Mammary epithelial cell (primary cell): ENCODE measurements at regions of chr3 and their contacts with region 1.

Region 1: GRCh38 chr3:170221924-170222646 is at the start of gene PRKCI:
- DNase-seq: peak; percentile 96
- H3K4me3 ChIP-seq: peak within 1 kb of the TSS; percentile 51 to 84 (median 77)
- H3K27ac ChIP-seq: peak within 1 kb of the TSS; percentile 99
- H3K4me1 ChIP-seq: peaks cover 28% of the 10 kb centered on the region
- H3K27me3 ChIP-seq: no peaks in the 10 kb centered on the region
- CTCF ChIP-seq: no peak
- total RNA-seq, gene PRKCI: 62.7 to 122 TPM

Region 2: GRCh38 chr3:170154569-170155143 is 67.4 kb before region 1 on chr3:
- CTCF ChIA-PET with region 1: no interaction called
- dilution Hi-C with region 1: no loop called
- in situ Hi-C with region 1: no loop called
- intact Hi-C with region 1: no loop called
- DNase-seq: no peak
- H3K4me3 ChIP-seq: no peak overlapping the region
- H3K27ac ChIP-seq: no peak overlapping the region
- H3K4me1 ChIP-seq: no peaks in the 10 kb centered on the region
- H3K27me3 ChIP-seq: no peaks in the 10 kb centered on the region
- CTCF ChIP-seq: no peak

Region 3: DNA sequence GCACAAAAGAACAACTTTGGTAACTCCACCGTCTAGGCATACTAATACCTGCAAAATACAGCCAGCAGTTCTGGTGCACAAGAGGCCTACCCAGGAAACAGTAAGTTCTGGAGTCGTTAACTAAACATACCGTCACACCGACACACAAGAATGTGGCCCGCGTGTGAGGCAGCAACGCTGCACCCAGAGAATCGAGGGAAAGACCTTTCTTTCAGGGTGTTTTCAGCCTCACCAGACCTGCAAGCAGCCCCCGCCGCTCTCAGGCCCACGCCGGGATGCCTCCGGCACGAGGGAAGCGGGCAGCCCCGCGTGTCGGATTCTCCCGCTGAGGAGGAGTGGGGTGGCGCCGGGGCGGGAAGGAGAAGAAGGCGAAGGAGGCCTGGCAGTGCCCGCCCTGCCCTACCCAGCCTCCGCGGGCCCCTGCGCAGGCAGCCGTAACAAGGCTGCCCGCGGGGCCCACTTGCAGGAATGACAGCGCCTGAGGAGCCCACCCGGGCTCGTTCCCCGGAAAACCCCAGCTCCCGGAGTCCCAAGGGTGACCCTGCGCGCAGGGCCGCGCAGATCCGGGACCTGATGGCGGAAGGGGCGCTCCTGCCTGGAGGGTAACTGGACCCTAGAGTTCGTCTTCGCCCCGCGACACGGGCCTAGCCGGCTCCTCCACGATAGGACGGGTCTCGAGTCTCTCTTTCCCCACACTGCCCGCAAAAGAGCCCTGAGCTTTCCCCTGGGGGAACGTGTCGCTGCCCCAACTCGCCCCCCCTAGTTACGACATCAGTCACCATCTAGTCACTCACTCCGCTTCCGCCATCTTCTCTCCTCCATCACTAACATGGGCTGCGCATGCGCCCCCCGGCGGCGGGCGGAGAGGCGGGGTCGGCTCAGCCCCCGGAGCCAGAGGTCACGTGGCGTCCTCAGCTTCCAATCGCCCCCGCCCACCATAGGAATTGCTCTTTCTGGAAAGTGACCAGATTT is 40.9 kb before region 1 on chr3 and contains the start of gene PHC3:
- CTCF ChIA-PET with region 1: no interaction called
- dilution Hi-C with region 1: no loop called
- in situ Hi-C with region 1: no loop called
- intact Hi-C with region 1: loop called (anchors 2 kb)
- DNase-seq: peak; percentile 82
- H3K4me3 ChIP-seq: peak within 1 kb of the TSS; percentile 72 to 95 (median 94)
- H3K27ac ChIP-seq: peak within 1 kb of the TSS; percentile 83
- H3K4me1 ChIP-seq: peaks cover 17% of the 10 kb centered on the region
- H3K27me3 ChIP-seq: no peaks in the 10 kb centered on the region
- CTCF ChIP-seq: peak in 1 of 2 donors; percentile 15
- total RNA-seq, gene PHC3: 43.0 to 51.4 TPM

Region 4: GRCh38 chr3:170189398-170190256 is 32.5 kb before region 1 on chr3:
- CTCF ChIA-PET with region 1: interaction called, 12 read pairs
- dilution Hi-C with region 1: no loop called
- in situ Hi-C with region 1: no loop called
- intact Hi-C with region 1: no loop called
- DNase-seq: no peak
- H3K4me3 ChIP-seq: no peak overlapping the region
- H3K27ac ChIP-seq: no peak overlapping the region
- H3K4me1 ChIP-seq: no peaks in the 10 kb centered on the region
- H3K27me3 ChIP-seq: no peaks in the 10 kb centered on the region
- CTCF ChIP-seq: no peak

Region 5: DNA sequence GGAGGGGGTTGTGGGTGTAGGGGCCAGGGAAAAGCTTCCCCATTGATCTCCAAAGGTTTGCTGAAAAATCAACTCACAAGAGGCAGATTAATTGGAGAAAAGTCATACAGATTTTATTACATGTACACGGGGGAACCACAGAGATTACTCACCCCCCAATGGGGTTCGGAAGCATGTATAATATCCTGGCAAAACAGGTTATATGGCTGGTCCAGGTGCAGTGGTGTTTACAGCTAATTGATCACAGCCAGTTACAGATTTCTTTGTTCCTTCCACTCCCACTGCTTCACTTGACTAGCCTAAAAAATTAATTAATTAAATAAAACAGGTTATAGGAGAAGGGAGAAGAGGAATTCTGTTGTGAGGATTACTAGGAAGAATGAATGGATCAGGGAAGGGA is 22.5 kb after region 1 on chr3:
- CTCF ChIA-PET with region 1: no interaction called
- dilution Hi-C with region 1: no loop called
- in situ Hi-C with region 1: no loop called
- intact Hi-C with region 1: loop called (anchors 2 kb)
- DNase-seq: peak; percentile 86
- H3K4me3 ChIP-seq: no peak overlapping the region
- H3K27ac ChIP-seq: peak overlapping the region; percentile 42
- H3K4me1 ChIP-seq: peaks cover 16% of the 10 kb centered on the region
- H3K27me3 ChIP-seq: no peaks in the 10 kb centered on the region
- CTCF ChIP-seq: no peak

Region 6: GRCh38 chr3:170257145-170257544 is 35.1 kb after region 1 on chr3:
- CTCF ChIA-PET with region 1: no interaction called
- dilution Hi-C with region 1: no loop called
- in situ Hi-C with region 1: no loop called
- intact Hi-C with region 1: loop called (anchors 5 kb)
- DNase-seq: no peak
- H3K4me3 ChIP-seq: no peak overlapping the region
- H3K27ac ChIP-seq: no peak overlapping the region
- H3K4me1 ChIP-seq: peaks cover 13% of the 10 kb centered on the region
- H3K27me3 ChIP-seq: no peaks in the 10 kb centered on the region
- CTCF ChIP-seq: no peak

Region 7: DNA sequence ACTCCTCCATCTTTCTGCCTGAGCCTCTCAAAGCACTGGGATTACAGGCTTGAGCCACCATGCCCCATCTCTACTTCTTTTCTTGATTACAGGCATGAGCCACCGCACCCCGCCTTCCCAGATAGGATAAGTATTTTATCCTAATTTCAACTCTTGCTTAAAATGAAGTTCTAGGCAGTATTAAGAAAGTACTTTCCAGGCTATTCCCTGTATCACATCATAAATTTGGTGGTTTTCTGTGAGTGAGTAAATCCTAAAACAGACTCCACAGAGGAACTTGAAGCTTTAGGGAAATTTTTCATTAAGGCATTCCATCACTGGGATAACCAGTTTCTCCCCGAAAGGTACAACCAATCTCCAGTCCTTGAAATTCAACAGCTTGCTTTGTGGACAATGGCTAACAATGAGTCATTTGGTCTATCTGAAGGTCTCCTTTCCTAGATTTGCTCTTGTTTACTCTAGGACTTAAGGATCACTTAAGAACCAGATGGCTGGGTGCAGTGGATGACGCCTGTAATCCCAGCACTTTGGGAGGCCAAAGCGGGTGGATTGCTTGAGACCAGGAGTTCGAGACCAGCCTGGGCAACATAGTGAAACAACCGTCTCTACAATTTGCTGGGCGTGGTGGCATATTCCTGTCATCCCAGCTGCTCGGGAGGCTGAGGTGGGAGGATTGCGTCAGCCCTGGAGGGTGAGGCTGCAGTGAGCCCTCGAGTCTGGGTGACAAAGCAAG is 85.8 kb after region 1 on chr3:
- CTCF ChIA-PET with region 1: no interaction called
- dilution Hi-C with region 1: no loop called
- in situ Hi-C with region 1: no loop called
- intact Hi-C with region 1: no loop called
- DNase-seq: peak; percentile 38
- H3K4me3 ChIP-seq: no peak overlapping the region
- H3K27ac ChIP-seq: no peak overlapping the region
- H3K4me1 ChIP-seq: no peaks in the 10 kb centered on the region
- H3K27me3 ChIP-seq: no peaks in the 10 kb centered on the region
- CTCF ChIP-seq: no peak